PC-9 (cell line): ENCODE measurements at regions of chr11 and their contacts with region 1.

Region 1: DNA sequence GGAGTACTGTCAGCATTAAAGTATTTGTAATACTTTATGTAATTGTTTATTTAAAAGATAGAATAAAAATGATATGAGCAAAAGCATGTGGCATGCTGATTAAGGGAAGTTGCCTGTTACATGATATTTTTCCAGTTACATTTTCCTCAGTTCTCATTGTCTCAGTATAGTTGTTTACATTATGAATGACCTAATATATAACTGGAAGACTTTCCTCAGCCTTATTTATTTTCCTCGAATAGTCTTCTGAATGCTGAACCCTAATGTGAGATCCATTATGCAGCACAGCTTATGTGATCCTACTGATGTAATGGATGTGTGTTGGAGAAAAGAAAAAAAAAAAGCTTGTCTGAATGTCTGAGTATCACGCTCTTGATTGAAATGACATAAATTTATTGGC is 95.5 kb downstream of the LUZP2 start:
- DNase-seq: no peak
- H3K4me3 ChIP-seq: no peak overlapping the region
- H3K27ac ChIP-seq: no peak overlapping the region
- H3K4me1 ChIP-seq: peaks cover 6% of the 10 kb centered on the region; the same call in 1 of the 2 replicates
- H3K27me3 ChIP-seq: no peaks in the 10 kb centered on the region
- CTCF ChIP-seq: no peak

Region 2: DNA sequence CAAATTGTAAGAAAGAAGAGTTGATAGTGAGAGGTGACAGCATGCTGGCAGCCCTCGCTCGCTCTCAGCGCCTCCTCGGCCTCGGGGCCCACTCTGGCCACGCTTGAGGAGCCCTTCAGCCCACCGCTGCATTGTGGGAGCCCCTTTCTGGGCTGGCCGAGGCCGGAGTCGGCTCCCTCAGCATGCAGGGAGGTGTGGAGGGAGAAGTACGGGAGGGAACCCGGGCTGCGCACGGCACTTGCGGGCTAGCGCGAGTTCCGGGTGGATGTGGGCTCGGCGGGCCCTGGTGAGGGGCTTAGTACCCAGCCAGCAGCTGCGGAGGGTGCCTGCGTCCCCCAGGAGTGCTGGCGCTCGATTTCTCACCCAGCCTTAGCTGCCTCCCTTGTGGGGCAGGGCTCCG is 1192.4 kb before region 1 on chr11:
- CTCF ChIA-PET with region 1: no interaction called
- POLR2A ChIA-PET with region 1: interaction called, 15 read pairs
- intact Hi-C with region 1: no loop called
- DNase-seq: no peak
- H3K4me3 ChIP-seq: no peak overlapping the region
- H3K27ac ChIP-seq: no peak overlapping the region
- H3K4me1 ChIP-seq: no peaks in the 10 kb centered on the region
- H3K27me3 ChIP-seq: no peaks in the 10 kb centered on the region
- CTCF ChIP-seq: no peak

Region 3: GRCh38 chr11:24617856-24618255 is 25.5 kb after region 1 on chr11:
- CTCF ChIA-PET with region 1: no interaction called
- POLR2A ChIA-PET with region 1: no interaction called
- intact Hi-C with region 1: no loop called
- DNase-seq: no peak
- H3K4me3 ChIP-seq: no peak overlapping the region
- H3K27ac ChIP-seq: no peak overlapping the region
- H3K4me1 ChIP-seq: no peaks in the 10 kb centered on the region
- H3K27me3 ChIP-seq: no peaks in the 10 kb centered on the region
- CTCF ChIP-seq: no peak

Region 4: DNA sequence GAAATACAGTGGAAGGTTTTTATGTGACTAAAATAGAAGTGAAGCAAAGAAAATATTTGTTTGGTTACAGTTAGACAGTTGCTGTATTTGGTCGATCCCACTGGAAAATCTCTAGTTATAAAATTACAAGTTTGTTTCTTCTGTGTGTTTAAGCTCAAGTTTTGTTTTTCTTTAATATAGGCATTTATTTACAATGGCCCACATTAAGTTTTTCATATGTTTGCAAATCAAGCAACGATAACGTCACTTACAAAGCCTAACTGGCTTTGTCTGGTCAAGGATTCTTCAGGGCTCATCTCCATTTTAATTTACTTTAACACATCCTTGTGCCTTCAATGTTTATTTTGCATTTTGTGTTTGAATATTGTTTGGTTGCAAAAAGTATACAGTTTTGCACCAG is 175.1 kb after region 1 on chr11:
- CTCF ChIA-PET with region 1: no interaction called
- POLR2A ChIA-PET with region 1: no interaction called
- intact Hi-C with region 1: no loop called
- DNase-seq: no peak
- H3K4me3 ChIP-seq: no peak overlapping the region
- H3K27ac ChIP-seq: no peak overlapping the region
- H3K4me1 ChIP-seq: no peaks in the 10 kb centered on the region
- H3K27me3 ChIP-seq: no peaks in the 10 kb centered on the region
- CTCF ChIP-seq: no peak